ENCODE measurements at regions of chr10 and their contacts with region 1.

Region 1: GRCh38 chr10:124388823-124389612 is 29.7 kb downstream of the OAT start:
- DNase-seq: peak; percentile 97
- ATAC-seq: peak; percentile 99
- H3K4me3 Mint-ChIP-seq: peak overlapping the region; percentile 58
- H3K27ac Mint-ChIP-seq: no peak overlapping the region
- H3K4me1 Mint-ChIP-seq: peaks cover 3% of the 10 kb centered on the region
- H3K27me3 Mint-ChIP-seq: peaks cover 7% of the 10 kb centered on the region
- CTCF ChIP-seq: peak; percentile 86

Region 2: GRCh38 chr10:123552760-123553554 is 836.1 kb before region 1 on chr10:
- CTCF ChIA-PET with region 1: no interaction called
- POLR2A ChIA-PET with region 1: no interaction called
- intact Hi-C with region 1: no loop called
- DNase-seq: no peak
- ATAC-seq: peak; percentile 25
- H3K4me3 Mint-ChIP-seq: no peak overlapping the region
- H3K27ac Mint-ChIP-seq: no peak overlapping the region
- H3K4me1 Mint-ChIP-seq: peaks cover 2% of the 10 kb centered on the region
- H3K27me3 Mint-ChIP-seq: peaks cover 2% of the 10 kb centered on the region
- CTCF ChIP-seq: no peak

Region 3: GRCh38 chr10:123582084-123582989 is 806.7 kb before region 1 on chr10:
- CTCF ChIA-PET with region 1: interaction called, 5 read pairs
- POLR2A ChIA-PET with region 1: no interaction called
- intact Hi-C with region 1: loop called (anchors 1 kb)
- DNase-seq: peak; percentile 55
- ATAC-seq: peak; percentile 72
- H3K4me3 Mint-ChIP-seq: no peak overlapping the region
- H3K27ac Mint-ChIP-seq: no peak overlapping the region
- H3K4me1 Mint-ChIP-seq: no peaks in the 10 kb centered on the region
- H3K27me3 Mint-ChIP-seq: peaks cover 43% of the 10 kb centered on the region
- CTCF ChIP-seq: peak; percentile 31

Region 4: GRCh38 chr10:124035928-124036558 is 353.0 kb before region 1 on chr10:
- CTCF ChIA-PET with region 1: interaction called, 10 read pairs
- POLR2A ChIA-PET with region 1: interaction called, 6 read pairs
- intact Hi-C with region 1: loop called (anchors 1 kb)
- DNase-seq: peak; percentile 75
- ATAC-seq: peak; percentile 93
- H3K4me3 Mint-ChIP-seq: peak overlapping the region; percentile 85
- H3K27ac Mint-ChIP-seq: peak overlapping the region; percentile 95
- H3K4me1 Mint-ChIP-seq: peaks cover 26% of the 10 kb centered on the region
- H3K27me3 Mint-ChIP-seq: no peaks in the 10 kb centered on the region
- CTCF ChIP-seq: no peak

Region 5: GRCh38 chr10:124259139-124259825 is 129.7 kb before region 1 on chr10:
- CTCF ChIA-PET with region 1: interaction called, 5 read pairs
- POLR2A ChIA-PET with region 1: no interaction called
- intact Hi-C with region 1: loop called (anchors 1 kb)
- DNase-seq: no peak
- ATAC-seq: no peak
- H3K4me3 Mint-ChIP-seq: no peak overlapping the region
- H3K27ac Mint-ChIP-seq: no peak overlapping the region
- H3K4me1 Mint-ChIP-seq: no peaks in the 10 kb centered on the region
- H3K27me3 Mint-ChIP-seq: no peaks in the 10 kb centered on the region
- CTCF ChIP-seq: no peak

Region 6: GRCh38 chr10:124418726-124419501 is 29.9 kb after region 1 on chr10 and contains the start of gene OAT:
- CTCF ChIA-PET with region 1: interaction called, 6 read pairs
- POLR2A ChIA-PET with region 1: interaction called, 4 read pairs
- intact Hi-C with region 1: loop called (anchors 1 kb)
- DNase-seq: peak; percentile 92
- ATAC-seq: peak; percentile 97
- H3K4me3 Mint-ChIP-seq: peak within 1 kb of the TSS; percentile 82
- H3K27ac Mint-ChIP-seq: peak within 1 kb of the TSS; percentile 46
- H3K4me1 Mint-ChIP-seq: peaks cover 12% of the 10 kb centered on the region
- H3K27me3 Mint-ChIP-seq: peaks cover 19% of the 10 kb centered on the region
- CTCF ChIP-seq: no peak
- total RNA-seq, gene OAT: 19.6 and 20.1 TPM in 2 replicates

Region 7: DNA sequence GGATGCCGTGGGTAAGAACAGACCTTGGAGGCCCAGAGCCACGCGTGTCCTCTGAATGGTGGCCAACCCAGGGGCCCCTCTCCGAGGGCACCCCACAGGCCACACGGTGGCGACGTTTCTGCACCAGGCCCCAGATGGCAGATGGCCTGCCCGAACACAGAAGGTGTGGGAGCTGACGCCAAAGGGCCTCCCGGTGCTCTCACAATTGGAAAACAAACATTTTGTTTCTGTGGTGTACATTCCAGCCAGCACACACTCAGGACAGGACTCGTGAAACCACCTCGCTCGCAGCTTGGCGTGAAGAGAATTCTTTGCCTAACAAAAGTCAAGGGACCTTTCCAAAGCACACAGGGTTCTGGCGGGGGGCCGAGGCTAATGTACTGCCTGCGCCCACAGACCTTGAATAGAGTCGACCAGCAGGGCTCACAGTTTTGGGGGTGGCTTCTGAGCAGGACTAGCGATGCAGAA is 243.1 kb after region 1 on chr10:
- CTCF ChIA-PET with region 1: no interaction called
- POLR2A ChIA-PET with region 1: no interaction called
- intact Hi-C with region 1: no loop called
- DNase-seq: no peak
- ATAC-seq: no peak
- H3K4me3 Mint-ChIP-seq: no peak overlapping the region
- H3K27ac Mint-ChIP-seq: peak overlapping the region; percentile 95
- H3K4me1 Mint-ChIP-seq: peaks cover 95% of the 10 kb centered on the region
- H3K27me3 Mint-ChIP-seq: no peaks in the 10 kb centered on the region
- CTCF ChIP-seq: no peak

Region 8: DNA sequence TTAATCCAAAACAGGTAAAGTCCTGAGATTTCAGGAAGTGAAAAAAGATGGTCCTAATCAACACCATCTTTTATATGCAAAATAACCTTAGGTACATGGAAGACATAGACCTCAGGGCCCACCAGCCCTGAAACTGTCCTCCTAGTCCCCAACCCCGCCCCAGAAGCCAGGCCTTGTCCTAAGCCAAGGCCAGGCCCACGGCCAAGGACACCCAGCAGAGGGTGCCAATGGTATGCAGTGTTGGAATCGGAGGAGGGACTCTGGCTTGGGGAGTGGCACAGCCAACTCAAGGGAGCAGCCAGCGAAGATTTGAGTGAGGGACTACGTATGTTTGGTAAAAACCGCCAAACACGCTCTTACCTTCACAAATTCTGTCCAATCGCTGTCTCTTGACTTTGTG is 649.6 kb after region 1 on chr10:
- CTCF ChIA-PET with region 1: no interaction called
- POLR2A ChIA-PET with region 1: no interaction called
- intact Hi-C with region 1: no loop called
- DNase-seq: no peak
- ATAC-seq: no peak
- H3K4me3 Mint-ChIP-seq: no peak overlapping the region
- H3K27ac Mint-ChIP-seq: no peak overlapping the region
- H3K4me1 Mint-ChIP-seq: no peaks in the 10 kb centered on the region
- H3K27me3 Mint-ChIP-seq: peaks cover 29% of the 10 kb centered on the region
- CTCF ChIP-seq: no peak

Region 9: DNA sequence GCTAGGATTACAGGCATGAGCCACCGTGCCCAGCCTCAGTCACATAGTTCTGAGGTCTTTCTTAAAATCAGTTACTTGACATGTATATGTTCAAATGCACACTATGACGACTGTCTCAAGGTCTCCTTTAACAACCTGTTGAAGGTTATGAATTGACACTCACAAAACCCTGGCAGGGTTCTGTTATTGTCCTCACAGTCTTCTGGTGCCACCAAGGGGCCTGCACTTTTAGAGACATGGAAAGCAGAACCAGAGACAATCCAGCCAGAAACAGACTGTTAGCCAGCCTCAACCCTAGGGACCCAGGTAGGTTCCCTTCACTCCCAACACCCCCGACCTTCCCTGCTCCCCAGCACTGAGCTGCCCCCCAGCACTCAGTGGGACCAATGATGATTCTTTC is 1267.5 kb after region 1 on chr10:
- CTCF ChIA-PET with region 1: no interaction called
- POLR2A ChIA-PET with region 1: no interaction called
- intact Hi-C with region 1: no loop called
- DNase-seq: no peak
- ATAC-seq: no peak
- H3K4me3 Mint-ChIP-seq: no peak overlapping the region
- H3K27ac Mint-ChIP-seq: no peak overlapping the region
- H3K4me1 Mint-ChIP-seq: no peaks in the 10 kb centered on the region
- H3K27me3 Mint-ChIP-seq: peaks cover 4% of the 10 kb centered on the region
- CTCF ChIP-seq: no peak